Right cardiac atrium (tissue), 5 donors: ENCODE measurements at regions of chr9 and their contacts with region 1.

Region 1: DNA sequence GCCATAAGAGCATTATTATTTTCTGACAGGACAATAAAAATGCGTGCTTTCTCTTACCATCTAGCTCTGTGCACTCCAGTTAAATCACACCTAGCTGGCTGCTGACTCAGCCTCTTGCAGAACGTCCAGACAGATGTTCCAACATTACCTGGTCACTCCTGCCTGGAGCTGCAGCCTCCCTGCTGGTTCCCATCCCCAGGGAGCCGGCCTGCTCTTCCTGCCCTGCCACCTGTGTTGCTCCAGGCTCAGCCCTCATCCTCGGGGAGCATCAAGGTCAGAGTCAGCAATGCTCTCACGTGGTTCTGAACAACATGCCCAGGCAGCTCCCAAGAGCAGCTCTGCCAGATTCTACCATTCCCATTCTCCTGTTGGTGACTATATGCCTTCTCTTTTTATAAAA is 81.3 kb downstream of the GADD45G start:
- DNase-seq: no peak
- ATAC-seq: no peak
- H3K4me3 ChIP-seq: no peak overlapping the region
- H3K27ac ChIP-seq: no peak overlapping the region
- H3K4me1 ChIP-seq: peaks cover 8% of the 10 kb centered on the region
- H3K27me3 ChIP-seq: no peaks in the 10 kb centered on the region

Region 2: DNA sequence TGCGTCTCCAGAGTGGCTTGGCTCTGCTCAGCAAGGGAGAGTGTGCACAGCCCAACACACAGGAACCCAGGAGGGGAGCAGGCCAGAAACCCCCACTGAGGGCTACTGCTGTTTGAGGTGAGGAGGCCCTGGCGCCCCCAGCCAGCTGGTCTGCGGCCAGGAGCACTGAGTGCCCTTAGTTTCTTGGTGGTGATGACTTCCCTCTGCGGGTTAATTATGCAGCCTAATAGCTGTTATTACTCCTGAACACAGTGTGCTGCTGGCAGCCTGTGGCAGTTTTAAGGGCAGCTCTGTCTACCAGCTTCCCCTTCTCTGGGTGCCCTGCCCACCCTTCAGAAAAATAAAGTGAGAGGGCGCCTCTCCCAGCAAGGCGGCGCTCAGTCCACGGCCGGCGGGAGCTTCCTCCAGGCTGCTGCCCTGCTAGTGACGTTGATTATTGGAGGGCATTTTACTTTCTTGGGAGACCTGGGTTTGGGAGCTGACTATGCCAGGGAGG is 62.1 kb before region 1 on chr9:
- intact Hi-C with region 1: loop called in 1 of 4 experiments (anchors 10 kb)
- DNase-seq: peak in 2 of 3 donors; percentile 80 to 82
- ATAC-seq: peak; percentile 17 to 64
- H3K4me3 ChIP-seq: no peak overlapping the region
- H3K27ac ChIP-seq: peak overlapping the region; percentile 76
- H3K4me1 ChIP-seq: peaks cover 11% of the 10 kb centered on the region
- H3K27me3 ChIP-seq: no peaks in the 10 kb centered on the region